ENCODE measurements at regions of chr10 and their contacts with region 1.

Region 1: DNA sequence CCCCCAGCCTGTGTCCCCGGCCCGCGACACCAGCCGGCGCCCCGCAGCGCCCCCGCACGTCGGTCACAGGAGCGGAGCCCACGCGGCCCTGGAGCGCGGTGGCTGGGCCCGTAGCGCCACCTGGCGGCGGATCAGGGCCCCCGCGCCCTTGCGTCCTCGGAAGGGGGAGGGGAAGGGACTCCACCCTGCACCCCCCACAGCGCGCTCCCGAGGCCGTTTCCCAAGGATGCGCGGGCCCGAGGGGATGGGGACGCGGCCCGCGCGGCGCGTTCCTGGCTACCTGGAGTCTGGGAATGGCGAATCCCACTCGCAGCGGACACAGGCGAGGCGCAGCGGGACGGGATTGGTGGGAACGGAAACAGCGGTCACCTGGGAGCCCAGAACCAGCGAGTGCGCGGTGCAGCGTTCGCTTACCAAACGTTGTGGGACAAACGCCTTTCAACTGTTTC is 23.8 kb upstream of the MKI67 start:
- DNase-seq: peak; percentile 94
- H3K4me3 ChIP-seq: peak overlapping the region; percentile 19 to 77 (median 47)
- H3K27ac ChIP-seq: peak overlapping the region in 2 of 8 donors; percentile 46 to 48
- H3K4me1 ChIP-seq: peaks cover 0 to 31% (median 7%) of the 10 kb centered on the region in 6 donors
- H3K27me3 ChIP-seq: peaks cover 0 to 44% (median 11%) of the 10 kb centered on the region in 7 donors
- CTCF ChIP-seq: peak; percentile 78 to 95 (median 91)
- POLR2A ChIP-seq: no peak

Region 2: GRCh38 chr10:128087884-128088709 is 62.0 kb before region 1 on chr10:
- intact Hi-C with region 1: loop called (anchors 10 kb)
- DNase-seq: no peak
- H3K4me3 ChIP-seq: no peak overlapping the region
- H3K27ac ChIP-seq: no peak overlapping the region
- H3K4me1 ChIP-seq: no peaks in the 10 kb centered on the region
- H3K27me3 ChIP-seq: peaks cover 0 to 6% (median 0%) of the 10 kb centered on the region in 7 donors
- CTCF ChIP-seq: no peak
- POLR2A ChIP-seq: no peak

Region 3: GRCh38 chr10:128116851-128117615 is 33.0 kb before region 1 on chr10:
- intact Hi-C with region 1: no loop called
- DNase-seq: no peak
- H3K4me3 ChIP-seq: no peak overlapping the region
- H3K27ac ChIP-seq: no peak overlapping the region
- H3K4me1 ChIP-seq: no peaks in the 10 kb centered on the region
- H3K27me3 ChIP-seq: peaks cover 0 to 5% (median 0%) of the 10 kb centered on the region in 7 donors
- CTCF ChIP-seq: no peak
- POLR2A ChIP-seq: no peak

Region 4: GRCh38 chr10:128727114-128727513 is 577.0 kb after region 1 on chr10:
- intact Hi-C with region 1: no loop called
- DNase-seq: no peak
- H3K4me3 ChIP-seq: no peak overlapping the region
- H3K27ac ChIP-seq: no peak overlapping the region
- H3K4me1 ChIP-seq: no peaks in the 10 kb centered on the region
- H3K27me3 ChIP-seq: no peaks in the 10 kb centered on the region
- CTCF ChIP-seq: no peak
- POLR2A ChIP-seq: no peak